ENCODE measurements at regions of chrX and their contacts with region 1.

Region 1: GRCh38 chrX:130165703-130166502 is at the start of gene AIFM1:
- DNase-seq: peak; percentile 87 to 93 (median 89)
- H3K4me3 ChIP-seq: peak within 1 kb of the TSS; percentile 74 to 77
- H3K4me3 Mint-ChIP-seq: peak within 1 kb of the TSS; percentile 81 to 99 (median 92)
- H3K27ac ChIP-seq: peak within 1 kb of the TSS; percentile 74
- H3K27ac Mint-ChIP-seq: peak within 1 kb of the TSS; percentile 83 to 97 (median 95)
- H3K4me1 ChIP-seq: peaks cover 32% of the 10 kb centered on the region
- H3K4me1 Mint-ChIP-seq: peaks cover 11 to 57% (median 34%) of the 10 kb centered on the region in 4 donors
- H3K27me3 ChIP-seq: no peaks in the 10 kb centered on the region
- H3K27me3 Mint-ChIP-seq: no peaks in the 10 kb centered on the region
- total RNA-seq, gene AIFM1: 20.0 to 23.6 TPM

Region 2: GRCh38 chrX:130086447-130087206 is 79.3 kb before region 1 on chrX:
- CTCF ChIA-PET with region 1: interaction called, 24 read pairs
- POLR2A ChIA-PET with region 1: interaction called, 16 read pairs
- intact Hi-C with region 1: loop called (anchors 2 kb)
- DNase-seq: peak; percentile 76 to 84 (median 78)
- H3K4me3 ChIP-seq: peak overlapping the region; percentile 72 to 78
- H3K4me3 Mint-ChIP-seq: peak overlapping the region; percentile 88 to 94 (median 92)
- H3K27ac ChIP-seq: peak overlapping the region; percentile 70
- H3K27ac Mint-ChIP-seq: peak overlapping the region; percentile 89 to 94 (median 93)
- H3K4me1 ChIP-seq: peaks cover 76% of the 10 kb centered on the region
- H3K4me1 Mint-ChIP-seq: peaks cover 24 to 90% (median 70%) of the 10 kb centered on the region in 4 donors
- H3K27me3 ChIP-seq: no peaks in the 10 kb centered on the region
- H3K27me3 Mint-ChIP-seq: no peaks in the 10 kb centered on the region

Region 3: GRCh38 chrX:130186651-130187050 is 20.7 kb after region 1 on chrX:
- CTCF ChIA-PET with region 1: interaction called, 3 read pairs
- POLR2A ChIA-PET with region 1: interaction called, 28 read pairs
- intact Hi-C with region 1: no loop called
- DNase-seq: no peak
- H3K4me3 ChIP-seq: no peak overlapping the region
- H3K4me3 Mint-ChIP-seq: no peak overlapping the region
- H3K27ac ChIP-seq: no peak overlapping the region
- H3K27ac Mint-ChIP-seq: peak overlapping the region in 3 of 7 donors; percentile 10 to 84 (median 60)
- H3K4me1 ChIP-seq: peaks cover 15% of the 10 kb centered on the region
- H3K4me1 Mint-ChIP-seq: peaks cover 5 to 15% (median 8%) of the 10 kb centered on the region in 4 donors
- H3K27me3 ChIP-seq: no peaks in the 10 kb centered on the region
- H3K27me3 Mint-ChIP-seq: no peaks in the 10 kb centered on the region

Region 4: GRCh38 chrX:130216320-130216719 is 50.4 kb after region 1 on chrX:
- CTCF ChIA-PET with region 1: no interaction called
- POLR2A ChIA-PET with region 1: no interaction called
- intact Hi-C with region 1: no loop called
- DNase-seq: peak in 2 of 5 donors; percentile 2 to 31
- H3K4me3 ChIP-seq: no peak overlapping the region
- H3K4me3 Mint-ChIP-seq: no peak overlapping the region
- H3K27ac ChIP-seq: no peak overlapping the region
- H3K27ac Mint-ChIP-seq: no peak overlapping the region
- H3K4me1 ChIP-seq: no peaks in the 10 kb centered on the region
- H3K4me1 Mint-ChIP-seq: peaks cover 0 to 9% (median 3%) of the 10 kb centered on the region in 4 donors
- H3K27me3 ChIP-seq: no peaks in the 10 kb centered on the region
- H3K27me3 Mint-ChIP-seq: no peaks in the 10 kb centered on the region

Region 5: DNA sequence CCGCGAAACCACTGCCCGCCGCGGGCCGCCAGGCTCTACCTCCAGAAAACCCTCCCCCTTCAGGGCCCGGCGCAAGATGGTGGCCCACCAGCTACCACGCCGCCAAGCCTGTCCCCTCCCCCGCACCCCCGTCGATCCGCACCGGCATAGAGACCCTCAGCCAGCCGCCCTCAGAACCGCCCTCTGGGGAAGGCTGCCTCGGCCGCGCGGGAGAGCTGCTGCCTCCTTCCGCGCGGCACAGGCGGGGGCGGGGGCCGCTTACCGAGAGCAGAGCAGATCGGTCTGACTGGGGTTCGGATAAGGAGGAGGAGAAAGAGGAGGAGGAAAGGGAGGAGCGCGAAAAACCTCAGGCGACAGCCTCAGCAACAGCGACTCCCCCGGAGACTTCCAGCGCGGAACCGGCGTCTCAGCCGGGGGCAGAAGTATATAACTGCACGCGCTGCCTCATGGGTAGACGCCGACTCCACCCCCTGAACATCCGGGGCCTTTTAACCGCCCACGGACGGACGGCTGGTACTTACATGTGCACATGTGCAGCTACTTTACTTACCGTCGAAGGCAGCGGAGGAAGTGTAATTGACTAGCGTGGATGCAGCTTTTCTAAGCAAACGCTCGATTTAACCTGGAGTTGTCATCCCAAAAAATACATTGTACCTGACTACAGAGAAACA is 102.7 kb after region 1 on chrX and contains the start of gene ZNF280C:
- CTCF ChIA-PET with region 1: no interaction called
- POLR2A ChIA-PET with region 1: interaction called, 9 read pairs
- intact Hi-C with region 1: loop called (anchors 2 kb)
- DNase-seq: peak; percentile 85 to 93 (median 90)
- H3K4me3 ChIP-seq: peak within 1 kb of the TSS; percentile 57 to 76
- H3K4me3 Mint-ChIP-seq: peak within 1 kb of the TSS; percentile 87 to 92 (median 89)
- H3K27ac ChIP-seq: peak within 1 kb of the TSS; percentile 67
- H3K27ac Mint-ChIP-seq: peak within 1 kb of the TSS; percentile 82 to 94 (median 88)
- H3K4me1 ChIP-seq: peaks cover 24% of the 10 kb centered on the region
- H3K4me1 Mint-ChIP-seq: peaks cover 5 to 20% (median 7%) of the 10 kb centered on the region in 4 donors
- H3K27me3 ChIP-seq: no peaks in the 10 kb centered on the region
- H3K27me3 Mint-ChIP-seq: no peaks in the 10 kb centered on the region
- total RNA-seq, gene ZNF280C: 4.0 to 4.9 TPM